ENCODE measurements at regions of chr19 and their contacts with region 1.

Region 1: DNA sequence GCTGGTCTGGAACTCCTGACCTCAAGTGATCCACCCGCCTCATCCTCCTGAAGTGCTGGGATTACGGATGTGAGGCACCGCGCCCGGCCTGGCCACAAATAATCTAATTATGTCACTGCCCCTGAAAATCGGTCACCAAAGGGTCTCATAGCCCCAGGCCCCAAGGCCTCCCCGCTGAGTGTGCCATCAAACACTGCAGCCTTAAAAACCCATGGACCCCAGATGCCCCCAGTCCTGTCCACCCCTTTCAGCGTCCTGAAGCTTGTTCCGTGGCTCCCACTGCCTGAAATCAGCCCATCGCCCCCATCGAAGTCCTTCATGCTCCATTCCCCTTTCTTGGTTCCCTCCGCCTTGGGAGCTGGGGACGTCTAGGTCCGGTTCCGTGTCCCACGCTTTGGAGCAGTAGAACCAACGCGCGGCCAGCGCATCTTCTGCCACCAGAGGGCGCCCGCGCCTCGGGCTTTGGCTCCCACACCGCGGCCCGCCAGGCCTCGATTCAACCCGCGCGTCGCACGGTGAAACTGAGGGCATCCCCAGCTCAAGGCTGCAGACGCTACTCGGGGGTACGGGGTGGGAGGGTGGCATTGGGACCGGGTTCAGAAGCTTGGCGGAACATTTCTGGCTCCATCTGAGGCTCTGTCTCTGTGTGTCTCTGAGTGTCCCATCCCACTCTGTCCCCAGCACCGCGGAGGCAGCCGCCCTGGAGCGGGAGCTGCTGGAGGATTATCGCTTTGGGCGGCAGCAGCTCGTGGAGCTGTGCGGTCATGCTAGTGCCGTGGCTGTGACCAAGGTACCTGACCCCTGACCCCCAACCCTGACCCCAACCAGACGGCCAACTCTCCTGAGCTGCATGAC is 3.5 kb downstream of the YJEFN3 start:
- DNase-seq: peak; percentile 86
- H3K4me3 ChIP-seq: no peak overlapping the region
- H3K27ac ChIP-seq: no peak overlapping the region
- H3K4me1 ChIP-seq: peaks cover 3% of the 10 kb centered on the region; the same call in 1 of the 2 replicates
- H3K27me3 ChIP-seq: no peaks in the 10 kb centered on the region

Region 2: DNA sequence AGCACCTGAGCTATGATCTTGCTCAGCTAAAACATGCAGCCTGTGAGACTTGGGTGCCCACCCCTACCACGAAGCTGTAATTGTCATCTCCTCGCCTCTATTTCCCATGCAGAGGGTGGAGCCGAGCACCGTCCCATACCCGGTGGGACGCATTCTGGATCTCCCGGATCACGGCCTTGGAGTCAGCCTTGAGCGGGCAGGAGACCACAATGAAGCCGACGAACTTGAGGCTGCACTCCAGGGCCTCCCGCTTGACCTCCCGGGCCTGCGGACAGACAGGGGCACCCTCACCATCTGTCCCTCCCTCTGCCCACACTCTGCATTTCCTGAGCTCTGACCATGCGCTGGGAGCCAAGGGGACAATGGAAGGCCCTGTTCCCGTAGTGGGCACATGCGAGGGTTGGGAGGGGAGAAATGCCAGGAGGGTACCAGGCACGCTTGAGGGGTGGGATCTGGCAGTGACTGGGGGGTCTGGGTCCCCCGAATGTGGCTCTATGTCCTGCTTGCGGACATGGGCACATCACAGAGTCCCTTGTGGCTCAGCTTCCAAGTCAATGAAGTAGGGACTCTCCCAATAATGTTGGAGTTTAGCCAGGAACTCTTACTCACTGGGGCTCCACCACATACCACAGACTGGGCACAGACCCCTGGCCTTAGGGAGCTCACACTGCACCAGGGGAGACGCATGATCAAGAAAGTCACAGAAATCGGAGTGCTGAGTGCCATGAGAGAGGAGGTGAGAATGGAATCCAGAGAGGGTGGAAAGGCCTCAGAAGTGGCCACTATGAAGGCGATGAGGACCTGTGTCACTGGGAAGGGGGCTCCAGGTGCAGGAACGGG is 120.5 kb after region 1 on chr19:
- in situ Hi-C with region 1: no loop called
- DNase-seq: peak; percentile 25
- H3K4me3 ChIP-seq: no peak overlapping the region
- H3K27ac ChIP-seq: no peak overlapping the region
- H3K4me1 ChIP-seq: no peaks in the 10 kb centered on the region
- H3K27me3 ChIP-seq: no peaks in the 10 kb centered on the region

Region 3: DNA sequence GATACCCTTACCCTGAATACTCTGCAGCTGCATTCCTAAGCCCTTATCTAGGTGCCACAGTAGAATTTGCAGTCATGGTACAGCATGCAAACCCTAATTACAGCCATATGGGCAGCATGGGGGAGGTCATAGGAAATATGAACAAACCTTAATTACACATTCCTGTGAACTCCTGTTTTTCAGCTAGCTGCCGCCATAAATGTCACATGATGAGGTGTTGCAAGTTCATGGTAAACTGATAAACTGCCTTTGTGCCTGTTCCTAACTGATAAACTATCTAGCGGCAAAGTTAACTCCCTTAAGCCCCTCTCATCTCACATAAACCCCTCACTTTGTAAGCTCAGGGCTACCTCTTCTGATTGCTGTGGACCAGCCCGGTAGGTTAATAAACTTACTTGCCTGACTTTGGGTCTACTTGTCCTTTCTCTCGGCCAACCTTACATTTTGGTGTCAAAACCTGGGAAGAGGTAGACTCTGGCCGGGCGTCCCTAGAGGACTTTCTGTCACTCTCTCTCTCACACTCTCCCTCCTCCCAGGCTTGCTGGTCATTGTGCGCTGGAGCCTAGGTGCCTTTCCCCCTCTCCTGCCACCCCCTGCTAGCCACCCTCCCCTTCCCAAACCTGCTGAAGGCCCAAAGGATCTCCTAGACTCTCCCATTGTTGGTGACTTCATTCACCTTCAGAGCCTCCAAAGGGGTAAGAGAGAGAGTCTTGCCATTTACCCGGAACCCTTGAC is 411.8 kb after region 1 on chr19:
- in situ Hi-C with region 1: loop called (anchors 25 kb)
- DNase-seq: no peak
- H3K4me3 ChIP-seq: no peak overlapping the region
- H3K27ac ChIP-seq: no peak overlapping the region
- H3K4me1 ChIP-seq: no peaks in the 10 kb centered on the region
- H3K27me3 ChIP-seq: no peaks in the 10 kb centered on the region

Region 4: GRCh38 chr19:20237761-20238623 is 705.8 kb after region 1 on chr19:
- in situ Hi-C with region 1: loop called (anchors 25 kb)
- DNase-seq: peak; percentile 96
- H3K4me3 ChIP-seq: peak overlapping the region; percentile 95
- H3K27ac ChIP-seq: peak overlapping the region; percentile 67
- H3K4me1 ChIP-seq: no peaks in the 10 kb centered on the region
- H3K27me3 ChIP-seq: no peaks in the 10 kb centered on the region

Measured in GM23248 (cell line).